PC-9 (cell line): ENCODE measurements at regions of chr10 and their contacts with region 1.

Region 1: GRCh38 chr10:101012525-101013364 is 13.1 kb downstream of the LZTS2 start:
- DNase-seq: peak; percentile 67 to 76
- H3K4me3 ChIP-seq: no peak overlapping the region
- H3K27ac ChIP-seq: no peak overlapping the region
- H3K4me1 ChIP-seq: peaks cover 5% of the 10 kb centered on the region
- H3K27me3 ChIP-seq: no peaks in the 10 kb centered on the region
- CTCF ChIP-seq: peak; percentile 78

Region 2: DNA sequence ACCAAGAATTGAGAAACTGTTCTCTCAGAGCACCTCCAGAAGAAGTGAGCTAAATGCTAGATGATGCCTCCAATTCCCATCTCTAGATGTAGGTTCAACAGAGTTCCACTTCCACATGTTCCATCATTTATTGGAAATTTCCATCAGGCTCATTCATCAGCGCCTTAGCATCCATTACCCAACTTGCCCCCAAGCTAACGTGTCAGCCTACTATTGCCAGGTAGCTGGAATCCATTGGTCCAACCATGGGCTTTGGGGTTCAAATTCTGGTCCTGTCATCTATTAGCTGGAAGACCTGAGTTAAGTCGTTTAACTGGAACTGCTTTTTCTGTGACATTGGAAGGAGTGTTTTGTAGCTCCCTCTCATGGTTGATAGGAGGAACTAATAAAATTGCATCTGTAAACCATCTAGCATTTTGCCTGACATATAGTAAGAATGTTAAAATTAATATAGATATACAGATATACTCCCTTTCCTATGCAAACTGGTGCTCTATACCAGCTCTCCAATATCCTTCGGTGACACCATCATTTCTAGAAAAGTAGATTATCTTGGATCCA is 123.9 kb before region 1 on chr10:
- CTCF ChIA-PET with region 1: no interaction called
- POLR2A ChIA-PET with region 1: no interaction called
- intact Hi-C with region 1: loop called (anchors 5 kb)
- DNase-seq: no peak
- H3K4me3 ChIP-seq: no peak overlapping the region
- H3K27ac ChIP-seq: no peak overlapping the region
- H3K4me1 ChIP-seq: peaks cover 16% of the 10 kb centered on the region
- H3K27me3 ChIP-seq: no peaks in the 10 kb centered on the region
- CTCF ChIP-seq: no peak